HEK293T (cell line): ENCODE measurements at regions of chr1 and their contacts with region 1.

Region 1: GRCh38 chr1:37602750-37603694 is 7.3 kb upstream of the GNL2 start:
- DNase-seq: peak; percentile 75

Region 2: GRCh38 chr1:37682334-37682987 is 79.4 kb after region 1 on chr1:
- CTCF ChIA-PET with region 1: interaction called, 57 read pairs
- POLR2A ChIA-PET with region 1: interaction called, 4 read pairs
- DNase-seq: peak; percentile 66